Heart right ventricle (tissue), 16 donors: ENCODE measurements at regions of chr16 and their contacts with region 1.

Region 1: DNA sequence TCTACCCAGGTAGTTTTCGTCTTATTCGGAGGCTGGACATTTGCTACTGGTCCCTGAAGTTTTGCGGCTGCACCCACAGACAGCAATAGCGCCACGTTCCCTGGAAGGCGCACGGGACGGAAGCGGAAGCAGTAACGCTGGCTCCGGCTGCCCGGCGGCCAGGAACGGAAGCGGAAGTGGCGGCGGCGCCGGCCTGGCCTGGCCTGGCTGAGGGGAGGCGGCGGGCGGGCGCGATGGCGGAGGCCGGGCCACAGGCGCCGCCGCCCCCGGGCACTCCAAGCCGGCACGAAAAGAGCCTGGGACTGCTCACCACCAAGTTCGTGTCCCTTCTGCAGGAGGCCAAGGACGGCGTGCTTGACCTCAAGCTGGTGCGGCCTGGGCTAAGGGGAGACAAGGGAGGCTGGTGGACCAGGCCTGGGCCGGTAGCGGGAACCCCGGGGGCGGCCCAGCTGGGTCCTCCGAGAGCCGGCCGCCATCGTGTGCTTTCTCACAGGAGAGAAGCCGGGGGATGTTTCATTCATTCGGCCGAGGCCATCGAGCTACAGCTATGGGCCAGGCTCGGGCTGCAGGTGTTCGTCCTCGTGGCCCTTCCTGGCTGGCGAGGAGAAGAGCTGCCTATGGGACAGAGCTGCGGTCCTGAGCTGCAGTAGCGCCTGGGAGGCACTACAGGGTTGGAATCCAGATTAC is at the start of gene E2F4:
- DNase-seq: peak; percentile 92
- ATAC-seq: peak; percentile 88 to 97 (median 94)
- H3K4me3 ChIP-seq: peak within 1 kb of the TSS; percentile 78 to 100 (median 90)
- H3K27ac ChIP-seq: peak within 1 kb of the TSS; percentile 13 to 94 (median 86)
- H3K4me1 ChIP-seq: peaks cover 18 to 52% (median 33%) of the 10 kb centered on the region in 9 donors
- H3K27me3 ChIP-seq: no peaks in the 10 kb centered on the region
- CTCF ChIP-seq: peak in 1 of 9 donors; percentile 8
- total RNA-seq, gene E2F4: 21.9 to 45.6 (median 28.6) TPM

Region 2: DNA sequence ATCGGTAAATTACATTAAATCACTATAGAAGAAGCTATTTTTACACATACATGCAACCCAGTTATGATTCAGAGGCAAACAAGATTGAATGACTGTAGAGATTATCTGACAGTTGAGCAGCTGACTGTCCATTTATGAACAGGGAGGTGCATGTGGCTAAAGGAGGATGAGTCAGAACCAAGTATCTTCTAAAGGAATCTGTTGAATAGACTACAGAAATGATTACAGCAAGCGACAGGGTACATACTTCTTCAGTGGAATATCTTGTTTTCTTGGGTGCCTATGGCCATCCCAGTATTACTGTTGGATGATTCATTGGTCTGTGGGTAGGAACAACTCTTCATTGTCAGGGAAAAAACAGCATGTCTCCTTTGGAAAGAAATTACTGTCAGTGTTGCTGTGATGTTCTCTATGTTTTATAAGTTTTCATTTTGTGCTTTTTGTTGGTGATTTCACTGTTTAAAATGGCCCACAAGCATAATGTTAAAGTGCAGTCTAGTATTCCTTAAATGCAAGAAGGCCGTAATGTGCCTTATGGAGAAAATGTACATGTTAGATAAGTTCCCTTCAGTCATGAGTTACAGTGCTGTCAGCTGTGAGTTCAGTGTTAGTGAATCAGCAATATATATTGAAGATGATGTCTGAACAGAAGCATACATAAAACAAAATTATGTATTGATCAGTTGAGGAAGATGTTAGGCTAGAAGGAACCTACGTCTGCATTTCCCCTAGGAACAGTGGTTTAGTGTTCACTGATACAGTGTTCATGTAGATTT is 136.2 kb before region 1 on chr16:
- intact Hi-C with region 1: no loop called
- DNase-seq: no peak
- ATAC-seq: no peak
- H3K4me3 ChIP-seq: no peak overlapping the region
- H3K27ac ChIP-seq: no peak overlapping the region
- H3K4me1 ChIP-seq: peaks cover 0 to 31% (median 0%) of the 10 kb centered on the region in 9 donors
- H3K27me3 ChIP-seq: no peaks in the 10 kb centered on the region
- CTCF ChIP-seq: no peak

Region 3: GRCh38 chr16:67226804-67227557 is 34.8 kb after region 1 on chr16 and contains the start of gene TMEM208:
- intact Hi-C with region 1: loop called in 3 of 10 experiments (anchors 2 to 5 kb)
- DNase-seq: peak; percentile 97 to 98
- ATAC-seq: peak; percentile 94 to 98 (median 97)
- H3K4me3 ChIP-seq: peak within 1 kb of the TSS; percentile 70 to 99 (median 92)
- H3K27ac ChIP-seq: peak within 1 kb of the TSS; percentile 59 to 93 (median 88)
- H3K4me1 ChIP-seq: peaks cover 5 to 39% (median 29%) of the 10 kb centered on the region in 9 donors
- H3K27me3 ChIP-seq: no peaks in the 10 kb centered on the region
- CTCF ChIP-seq: peak in 4 of 9 donors; percentile 20 to 42 (median 31)
- total RNA-seq, gene TMEM208: 7.6 to 22.1 (median 11.7) TPM

Region 4: DNA sequence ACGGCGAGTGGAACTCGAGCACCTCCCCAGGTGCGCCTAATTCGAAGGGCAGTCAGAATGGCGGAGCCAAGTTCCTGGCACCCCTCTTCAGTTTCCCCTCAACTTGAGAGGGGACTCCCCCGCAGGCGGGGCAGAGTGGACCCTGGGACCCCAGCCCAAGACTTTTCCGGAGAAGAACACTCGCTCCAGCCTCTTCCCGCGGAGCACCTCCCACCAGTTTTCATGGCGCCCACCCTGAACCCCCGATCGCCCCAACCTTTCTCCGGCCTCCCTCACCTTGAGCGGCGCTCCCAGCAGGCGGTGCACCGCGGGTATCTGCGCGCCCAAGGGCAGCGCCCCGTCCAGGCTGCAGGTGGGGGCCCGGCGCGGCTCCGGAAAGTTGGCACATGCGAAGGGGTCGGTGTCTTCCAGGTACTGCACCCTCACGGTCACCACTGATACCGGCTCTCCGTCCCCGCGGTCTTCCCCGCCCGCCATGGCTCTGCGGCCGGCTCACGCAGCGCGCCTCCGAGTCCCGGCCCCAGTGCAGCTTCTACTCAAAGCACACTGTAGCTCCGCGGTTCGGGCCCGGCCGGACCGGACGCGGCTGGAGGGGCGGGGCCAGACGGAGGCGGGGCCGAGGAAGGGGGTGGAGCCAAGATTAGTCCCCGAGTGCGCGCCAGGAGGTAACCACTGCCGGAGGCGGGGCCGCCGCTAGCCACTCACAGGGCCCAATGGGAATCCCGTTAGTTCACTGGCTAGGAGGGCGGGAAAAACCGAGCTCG is 55.0 kb after region 1 on chr16 and contains the start of gene FHOD1:
- intact Hi-C with region 1: loop called in 1 of 10 experiments (anchors 5 kb)
- DNase-seq: peak; percentile 98 to 99
- ATAC-seq: peak; percentile 77 to 89 (median 83)
- H3K4me3 ChIP-seq: peak within 1 kb of the TSS; percentile 69 to 97 (median 84)
- H3K27ac ChIP-seq: peak within 1 kb of the TSS; percentile 93 to 99 (median 96)
- H3K4me1 ChIP-seq: peaks cover 25 to 69% (median 58%) of the 10 kb centered on the region in 9 donors
- H3K27me3 ChIP-seq: peaks cover 0 to 34% (median 0%) of the 10 kb centered on the region in 7 donors
- CTCF ChIP-seq: peak in 1 of 9 donors; percentile 6
- total RNA-seq, gene FHOD1: 11.6 to 26.2 (median 19.1) TPM